HepG2 (cell line): ENCODE measurements at regions of chr9 and their contacts with region 1.

Region 1: GRCh38 chr9:136885950-136886578 is at the start of gene TRAF2:
- DNase-seq: peak; percentile 94
- ATAC-seq: peak; percentile 85
- H3K4me3 ChIP-seq: peak within 1 kb of the TSS; percentile 81 to 92 (median 85)
- H3K27ac ChIP-seq: peak within 1 kb of the TSS; percentile 74
- H3K4me1 ChIP-seq: peaks cover 57% of the 10 kb centered on the region
- H3K27me3 ChIP-seq: no peaks in the 10 kb centered on the region
- CTCF ChIP-seq: peak; percentile 26; the same call in 1 of the 2 replicates
- EP300 ChIP-seq: no peak
- POLR2A ChIP-seq: peak in 1 of 2 experiments; percentile 91; a peak in 2 of 4 replicates
- RAD21 ChIP-seq: peak; percentile 60
- total RNA-seq, gene TRAF2: 13.4 and 13.6 TPM in 2 replicates

Region 2: DNA sequence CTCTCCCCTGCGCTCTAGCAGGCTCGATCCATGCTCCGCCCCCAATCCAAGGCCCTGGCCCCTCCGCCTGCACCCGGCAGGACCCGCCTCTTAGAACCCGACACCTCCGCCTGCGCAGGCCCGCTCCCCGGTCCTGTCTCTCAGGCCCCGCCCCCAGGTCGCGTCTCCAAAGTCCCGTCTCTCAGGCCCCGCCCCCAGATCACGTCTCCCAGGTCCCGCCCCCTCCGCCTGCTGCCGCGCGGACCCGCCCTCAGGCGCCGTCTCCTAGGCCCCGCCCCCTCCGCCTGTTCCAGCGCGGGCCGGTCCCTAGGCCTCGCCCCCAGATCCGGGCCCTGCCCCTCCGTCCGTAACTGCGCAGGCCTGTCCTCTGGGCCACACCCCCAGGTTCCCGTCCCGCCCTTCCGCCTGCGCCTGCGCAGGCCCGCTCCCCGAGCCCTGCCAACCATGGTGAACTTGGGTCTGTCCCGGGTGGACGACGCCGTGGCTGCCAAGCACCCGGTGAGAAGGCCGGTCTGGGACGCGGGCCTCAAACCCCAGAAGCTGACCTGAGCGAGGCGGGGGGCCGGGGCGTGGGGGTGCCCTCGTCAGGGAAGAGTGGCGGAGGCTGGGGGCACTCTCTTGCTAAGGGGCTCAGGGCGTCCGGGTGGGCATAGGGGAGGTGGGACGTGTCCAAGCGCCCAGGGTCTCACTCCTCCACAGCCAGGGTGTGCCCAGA is 95.0 kb before region 1 on chr9 and contains the start of gene TMEM141:
- CTCF ChIA-PET with region 1: no interaction called
- POLR2A ChIA-PET with region 1: interaction called, 6 read pairs
- in situ Hi-C with region 1: no loop called
- intact Hi-C with region 1: loop called (anchors 10 kb)
- DNase-seq: peak; percentile 97
- ATAC-seq: peak; percentile 84
- H3K4me3 ChIP-seq: peak within 1 kb of the TSS; percentile 78 to 98 (median 82)
- H3K27ac ChIP-seq: peak within 1 kb of the TSS; percentile 91
- H3K4me1 ChIP-seq: peaks cover 82% of the 10 kb centered on the region
- H3K27me3 ChIP-seq: no peaks in the 10 kb centered on the region; a peak in 1 of 5 replicates
- CTCF ChIP-seq: no peak
- EP300 ChIP-seq: no peak
- POLR2A ChIP-seq: peak in 1 of 2 experiments; percentile 5; a peak in 1 of 4 replicates
- RAD21 ChIP-seq: no peak
- total RNA-seq, gene TMEM141: 81.0 and 84.7 TPM in 2 replicates

Region 3: GRCh38 chr9:136858844-136859757 is 27.0 kb before region 1 on chr9:
- CTCF ChIA-PET with region 1: no interaction called
- POLR2A ChIA-PET with region 1: interaction called, 10 read pairs
- in situ Hi-C with region 1: no loop called
- intact Hi-C with region 1: no loop called
- DNase-seq: no peak
- ATAC-seq: peak; percentile 47
- H3K4me3 ChIP-seq: no peak overlapping the region
- H3K27ac ChIP-seq: peak overlapping the region; percentile 26
- H3K4me1 ChIP-seq: peaks cover 36% of the 10 kb centered on the region
- H3K27me3 ChIP-seq: no peaks in the 10 kb centered on the region
- CTCF ChIP-seq: no peak
- EP300 ChIP-seq: no peak
- POLR2A ChIP-seq: no peak
- RAD21 ChIP-seq: no peak; the same call in 1 of the 2 replicates

Region 4: DNA sequence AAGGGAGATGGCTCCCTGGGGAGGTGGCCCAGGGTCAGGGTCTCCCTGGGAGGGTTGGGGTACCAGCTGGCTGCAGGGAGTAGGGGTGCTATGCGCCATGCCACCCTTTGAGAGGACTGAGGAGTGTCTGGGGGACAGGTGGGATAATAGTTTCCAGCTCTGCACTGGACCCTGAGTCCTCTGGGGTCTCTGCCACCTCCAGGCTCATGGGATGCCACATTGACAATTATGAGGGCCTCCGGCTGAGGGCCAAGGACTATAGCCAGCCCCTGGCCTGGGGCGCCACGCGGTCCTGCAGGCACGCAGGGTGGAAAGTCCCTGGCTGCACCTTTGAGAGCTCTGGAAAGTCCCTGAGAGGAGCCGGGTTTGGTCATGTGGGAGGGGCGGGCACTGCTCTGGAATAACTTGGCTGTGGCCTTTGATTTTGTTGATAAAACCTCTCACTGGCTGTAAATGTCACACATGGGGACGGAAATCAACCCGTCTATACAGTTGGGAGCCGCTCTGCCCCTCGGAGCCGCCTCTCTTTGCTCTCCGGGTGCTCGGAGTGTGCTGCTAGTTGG is 16.3 kb after region 1 on chr9:
- CTCF ChIA-PET with region 1: no interaction called
- POLR2A ChIA-PET with region 1: interaction called, 20 read pairs
- in situ Hi-C with region 1: no loop called
- intact Hi-C with region 1: no loop called
- DNase-seq: no peak
- ATAC-seq: peak; percentile 28
- H3K4me3 ChIP-seq: no peak overlapping the region
- H3K27ac ChIP-seq: peak overlapping the region; percentile 67
- H3K4me1 ChIP-seq: peaks cover 27% of the 10 kb centered on the region
- H3K27me3 ChIP-seq: no peaks in the 10 kb centered on the region
- CTCF ChIP-seq: no peak
- EP300 ChIP-seq: no peak
- POLR2A ChIP-seq: no peak
- RAD21 ChIP-seq: no peak

Region 5: DNA sequence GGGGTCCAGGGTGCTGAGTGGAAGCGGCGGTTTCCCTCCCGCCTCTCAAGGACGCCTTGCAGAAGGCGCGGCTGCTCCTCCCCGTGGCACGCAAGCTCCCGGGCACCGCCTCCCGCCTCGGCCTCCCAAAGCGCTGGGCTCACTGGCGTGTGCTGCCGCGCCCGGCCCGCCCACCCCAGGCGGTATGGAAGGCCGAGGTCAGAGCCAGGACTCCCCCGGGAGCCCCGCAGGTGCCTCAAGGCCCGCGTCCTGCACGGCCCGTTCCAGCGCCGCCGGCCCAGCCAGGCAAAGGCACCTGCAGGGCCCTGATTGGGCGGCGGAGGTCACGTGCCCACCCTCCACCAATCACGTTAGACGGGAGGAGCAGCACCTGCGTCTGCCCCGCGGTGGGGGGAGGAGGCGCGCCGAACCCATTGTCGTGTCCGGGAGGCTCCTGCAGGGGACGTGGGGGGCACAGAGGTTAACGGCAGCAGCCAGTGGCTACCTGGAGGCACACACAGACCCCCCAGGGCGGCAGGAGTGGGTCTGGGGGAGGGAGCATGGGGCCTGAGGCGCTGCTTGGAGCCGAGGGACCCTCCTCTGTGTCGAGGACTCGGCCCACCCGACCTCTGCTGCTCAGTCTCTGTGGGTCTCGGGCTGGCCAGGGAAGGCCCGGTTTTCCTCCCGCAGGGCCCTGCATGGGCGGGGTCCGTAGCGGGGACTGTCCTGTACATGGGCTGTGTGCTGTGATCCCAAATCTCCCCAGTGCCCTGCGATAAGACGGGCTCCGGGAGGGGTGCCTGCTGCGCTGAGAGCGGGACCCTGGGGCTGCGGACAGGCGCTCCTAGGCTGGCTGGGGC is 64.0 kb after region 1 on chr9:
- CTCF ChIA-PET with region 1: no interaction called
- POLR2A ChIA-PET with region 1: interaction called, 11 read pairs
- in situ Hi-C with region 1: no loop called
- intact Hi-C with region 1: no loop called
- DNase-seq: peak; percentile 94
- ATAC-seq: peak; percentile 80
- H3K4me3 ChIP-seq: peak overlapping the region; percentile 68 to 90 (median 87)
- H3K27ac ChIP-seq: peak overlapping the region; percentile 95
- H3K4me1 ChIP-seq: peaks cover 56% of the 10 kb centered on the region
- H3K27me3 ChIP-seq: no peaks in the 10 kb centered on the region
- CTCF ChIP-seq: peak; percentile 58
- EP300 ChIP-seq: no peak; a peak in 1 of 4 replicates
- POLR2A ChIP-seq: peak in 1 of 2 experiments; percentile 42; a peak in 1 of 4 replicates
- RAD21 ChIP-seq: peak; percentile 25

Region 6: GRCh38 chr9:137162505-137163100 is 276.5 kb after region 1 on chr9:
- CTCF ChIA-PET with region 1: no interaction called
- POLR2A ChIA-PET with region 1: no interaction called
- in situ Hi-C with region 1: no loop called
- intact Hi-C with region 1: no loop called
- DNase-seq: no peak
- ATAC-seq: peak; percentile 67
- H3K4me3 ChIP-seq: peak overlapping the region; percentile 34 to 62 (median 47); a peak in 4 of 6 replicates
- H3K27ac ChIP-seq: no peak overlapping the region
- H3K4me1 ChIP-seq: no peaks in the 10 kb centered on the region
- H3K27me3 ChIP-seq: peaks cover 23 to 91% of the 10 kb centered on the region in 2 experiments; a peak in 4 of 5 replicates
- CTCF ChIP-seq: peak; percentile 64
- EP300 ChIP-seq: no peak
- POLR2A ChIP-seq: no peak
- RAD21 ChIP-seq: no peak

Region 7: DNA sequence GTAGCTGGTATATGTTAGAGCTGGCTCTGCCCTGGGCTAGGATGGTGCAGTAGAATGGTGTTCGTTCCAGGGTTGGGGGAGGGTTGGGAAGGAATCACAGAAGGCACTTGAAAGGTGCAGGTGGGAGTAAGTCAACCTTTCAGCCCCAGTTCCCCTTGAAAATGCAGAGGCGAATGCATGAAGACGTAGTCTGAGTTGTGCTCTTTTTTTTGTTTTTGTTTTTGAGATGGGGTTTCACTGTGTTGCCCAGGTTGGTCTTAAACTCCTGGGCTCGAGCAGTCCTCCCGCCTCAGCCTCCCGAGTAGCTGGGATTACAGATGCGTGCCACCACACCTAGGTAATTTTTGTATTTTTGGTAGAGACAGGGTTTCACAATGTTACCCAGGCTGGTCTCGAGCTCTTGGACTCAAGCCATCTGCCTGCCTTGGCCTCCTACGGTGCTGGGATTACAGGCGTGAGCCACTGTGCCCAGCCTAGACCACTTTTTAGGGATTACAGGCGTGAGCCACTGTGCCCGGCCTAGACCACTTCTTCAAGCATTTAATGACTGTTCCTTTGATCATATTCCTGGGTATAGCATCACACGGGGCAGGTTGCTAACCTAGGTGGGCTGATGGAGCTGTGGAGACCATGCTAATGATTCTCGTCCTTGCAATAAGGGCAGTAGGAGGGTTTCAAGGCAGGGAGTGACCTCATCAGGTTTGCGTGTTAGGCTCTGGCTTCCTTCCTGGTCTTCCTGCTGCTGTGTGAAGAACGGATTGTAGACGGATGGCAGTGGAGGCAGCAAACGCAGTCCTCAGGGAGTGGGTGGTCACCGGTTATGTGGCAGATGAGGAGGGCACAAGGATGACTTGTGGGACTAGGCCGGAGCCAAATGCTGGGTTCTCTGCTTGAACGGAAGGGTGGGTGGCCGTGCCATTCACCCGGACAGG is 746.4 kb after region 1 on chr9:
- CTCF ChIA-PET with region 1: no interaction called
- POLR2A ChIA-PET with region 1: no interaction called
- in situ Hi-C with region 1: no loop called
- intact Hi-C with region 1: no loop called
- DNase-seq: no peak
- ATAC-seq: no peak
- H3K4me3 ChIP-seq: no peak overlapping the region
- H3K27ac ChIP-seq: no peak overlapping the region
- H3K4me1 ChIP-seq: peaks cover 35% of the 10 kb centered on the region
- H3K27me3 ChIP-seq: no peaks in the 10 kb centered on the region
- CTCF ChIP-seq: no peak
- EP300 ChIP-seq: no peak
- POLR2A ChIP-seq: no peak
- RAD21 ChIP-seq: no peak